Activated CD8-positive, alpha-beta T cell treated with anti-CD3 and anti-CD28 coated beads for 36 hours (primary cell): ENCODE measurements at regions of chr2 and their contacts with region 1.

Region 1: GRCh38 chr2:219218732-219219701 is at the start of gene ABCB6:
- DNase-seq: peak; percentile 95
- ATAC-seq: peak; percentile 92
- H3K4me3 Mint-ChIP-seq: peak within 1 kb of the TSS; percentile 88
- H3K27ac Mint-ChIP-seq: peak within 1 kb of the TSS; percentile 77
- H3K4me1 Mint-ChIP-seq: peaks cover 25% of the 10 kb centered on the region
- H3K27me3 Mint-ChIP-seq: no peaks in the 10 kb centered on the region
- CTCF ChIP-seq: no peak
- total RNA-seq, gene ABCB6: 32.3 to 35.7 TPM

Region 2: DNA sequence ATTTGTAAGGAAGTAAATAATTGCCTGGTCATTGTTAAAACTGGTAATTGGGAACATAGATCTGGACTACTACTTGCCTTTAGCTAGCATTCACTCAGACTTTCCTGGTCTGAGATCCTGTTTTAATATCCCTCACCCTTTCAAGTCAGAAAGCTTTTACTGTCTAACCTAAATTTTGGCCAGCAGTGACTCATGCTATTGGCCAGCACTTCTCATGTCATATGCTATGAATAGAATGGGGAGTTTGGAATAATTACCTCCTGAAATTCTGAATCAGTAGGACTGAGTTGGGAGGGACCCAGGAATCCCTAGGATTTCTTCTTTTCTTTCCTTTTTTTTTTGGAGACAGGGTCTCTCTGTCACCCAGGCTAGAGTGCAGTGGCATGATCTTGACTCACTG is 527.8 kb before region 1 on chr2:
- CTCF ChIA-PET with region 1: no interaction called
- POLR2A ChIA-PET with region 1: no interaction called
- intact Hi-C with region 1: no loop called
- DNase-seq: no peak
- ATAC-seq: no peak
- H3K4me3 Mint-ChIP-seq: no peak overlapping the region
- H3K27ac Mint-ChIP-seq: no peak overlapping the region
- H3K4me1 Mint-ChIP-seq: peaks cover 2% of the 10 kb centered on the region
- H3K27me3 Mint-ChIP-seq: no peaks in the 10 kb centered on the region
- CTCF ChIP-seq: no peak

Region 3: GRCh38 chr2:219104107-219105035 is 114.6 kb before region 1 on chr2:
- CTCF ChIA-PET with region 1: no interaction called
- POLR2A ChIA-PET with region 1: no interaction called
- intact Hi-C with region 1: no loop called
- DNase-seq: peak; percentile 30
- ATAC-seq: peak; percentile 90
- H3K4me3 Mint-ChIP-seq: no peak overlapping the region
- H3K27ac Mint-ChIP-seq: peak overlapping the region; percentile 28
- H3K4me1 Mint-ChIP-seq: peaks cover 32% of the 10 kb centered on the region
- H3K27me3 Mint-ChIP-seq: no peaks in the 10 kb centered on the region
- CTCF ChIP-seq: peak; percentile 82

Region 4: GRCh38 chr2:219171231-219171651 is 47.8 kb before region 1 on chr2:
- CTCF ChIA-PET with region 1: interaction called, 49 read pairs
- POLR2A ChIA-PET with region 1: interaction called, 6 read pairs
- intact Hi-C with region 1: no loop called
- DNase-seq: peak; percentile 42
- ATAC-seq: peak; percentile 53
- H3K4me3 Mint-ChIP-seq: no peak overlapping the region
- H3K27ac Mint-ChIP-seq: no peak overlapping the region
- H3K4me1 Mint-ChIP-seq: peaks cover 34% of the 10 kb centered on the region
- H3K27me3 Mint-ChIP-seq: no peaks in the 10 kb centered on the region
- CTCF ChIP-seq: peak; percentile 94

Region 5: GRCh38 chr2:219199470-219200211 is 19.4 kb before region 1 on chr2:
- CTCF ChIA-PET with region 1: no interaction called
- POLR2A ChIA-PET with region 1: interaction called, 15 read pairs
- intact Hi-C with region 1: no loop called
- DNase-seq: no peak
- ATAC-seq: peak; percentile 71
- H3K4me3 Mint-ChIP-seq: peak overlapping the region; percentile 62
- H3K27ac Mint-ChIP-seq: peak overlapping the region; percentile 40
- H3K4me1 Mint-ChIP-seq: peaks cover 17% of the 10 kb centered on the region
- H3K27me3 Mint-ChIP-seq: no peaks in the 10 kb centered on the region
- CTCF ChIP-seq: no peak

Region 6: GRCh38 chr2:219206442-219207253 is 12.4 kb before region 1 on chr2 and contains the start of gene ZFAND2B:
- CTCF ChIA-PET with region 1: interaction called, 4 read pairs
- POLR2A ChIA-PET with region 1: interaction called, 31 read pairs
- intact Hi-C with region 1: no loop called
- DNase-seq: peak; percentile 96
- ATAC-seq: peak; percentile 93
- H3K4me3 Mint-ChIP-seq: peak within 1 kb of the TSS; percentile 90
- H3K27ac Mint-ChIP-seq: peak within 1 kb of the TSS; percentile 96
- H3K4me1 Mint-ChIP-seq: peaks cover 41% of the 10 kb centered on the region
- H3K27me3 Mint-ChIP-seq: no peaks in the 10 kb centered on the region
- CTCF ChIP-seq: no peak
- total RNA-seq, gene ZFAND2B: 31.3 to 33.3 TPM

Region 7: DNA sequence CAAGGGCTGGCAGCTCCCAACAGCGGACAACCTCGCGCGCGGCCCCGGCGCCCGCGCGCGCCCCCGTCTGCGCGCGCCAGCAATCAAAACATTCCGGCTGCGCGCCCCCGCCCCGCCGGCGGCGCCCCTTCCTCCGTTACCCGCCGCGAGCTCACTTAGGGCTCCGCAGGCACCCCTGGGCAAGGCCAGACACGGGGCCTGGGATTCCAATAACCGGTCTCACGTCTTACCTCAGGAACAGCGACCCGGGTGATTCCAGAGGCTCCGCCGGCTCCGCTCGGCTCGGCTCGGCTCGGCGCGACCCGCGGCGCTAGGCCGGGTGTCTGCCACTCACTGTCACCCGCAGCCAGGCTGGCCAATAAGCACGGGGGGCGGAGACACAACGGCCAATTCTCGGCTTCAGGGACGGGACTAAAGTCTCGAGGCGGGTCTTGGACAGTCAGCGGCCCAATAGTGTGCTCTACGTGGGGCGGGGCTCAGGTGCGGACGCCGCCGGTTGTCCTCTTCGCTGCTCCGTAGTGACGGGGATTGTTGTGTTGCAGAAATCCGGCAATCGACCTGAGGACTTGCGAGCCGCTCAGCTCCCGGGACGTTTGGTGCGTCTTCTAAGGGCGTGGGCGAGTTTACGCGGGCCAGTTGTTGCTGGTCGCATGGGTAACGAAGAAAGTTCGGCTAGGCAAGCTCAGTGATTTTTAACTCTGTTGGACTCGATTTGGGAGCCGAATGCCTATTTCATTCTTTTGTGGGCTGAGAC is 10.5 kb after region 1 on chr2 and contains the starts of genes ANKZF1 and ATG9A:
- CTCF ChIA-PET with region 1: interaction called, 8 read pairs
- POLR2A ChIA-PET with region 1: interaction called, 60 read pairs
- intact Hi-C with region 1: no loop called
- DNase-seq: peak; percentile 100
- ATAC-seq: peak; percentile 98
- H3K4me3 Mint-ChIP-seq: peak within 1 kb of the TSS; percentile 95
- H3K27ac Mint-ChIP-seq: peak within 1 kb of the TSS; percentile 97
- H3K4me1 Mint-ChIP-seq: peaks cover 39% of the 10 kb centered on the region
- H3K27me3 Mint-ChIP-seq: no peaks in the 10 kb centered on the region
- CTCF ChIP-seq: no peak
- total RNA-seq, gene ANKZF1: 216 to 217 TPM
- total RNA-seq, gene ATG9A: 54.8 to 58.7 TPM

Region 8: GRCh38 chr2:219245148-219245898 is 26.3 kb after region 1 on chr2 and contains the starts of genes GLB1L and STK16:
- CTCF ChIA-PET with region 1: interaction called, 3 read pairs
- POLR2A ChIA-PET with region 1: interaction called, 12 read pairs
- intact Hi-C with region 1: no loop called
- DNase-seq: peak; percentile 93
- ATAC-seq: peak; percentile 58
- H3K4me3 Mint-ChIP-seq: peak within 1 kb of the TSS; percentile 98
- H3K27ac Mint-ChIP-seq: peak within 1 kb of the TSS; percentile 99
- H3K4me1 Mint-ChIP-seq: peaks cover 61% of the 10 kb centered on the region
- H3K27me3 Mint-ChIP-seq: no peaks in the 10 kb centered on the region
- CTCF ChIP-seq: no peak
- total RNA-seq, gene GLB1L: 1.2 to 2.8 TPM
- total RNA-seq, gene STK16: 34.4 to 35.4 TPM

Region 9: DNA sequence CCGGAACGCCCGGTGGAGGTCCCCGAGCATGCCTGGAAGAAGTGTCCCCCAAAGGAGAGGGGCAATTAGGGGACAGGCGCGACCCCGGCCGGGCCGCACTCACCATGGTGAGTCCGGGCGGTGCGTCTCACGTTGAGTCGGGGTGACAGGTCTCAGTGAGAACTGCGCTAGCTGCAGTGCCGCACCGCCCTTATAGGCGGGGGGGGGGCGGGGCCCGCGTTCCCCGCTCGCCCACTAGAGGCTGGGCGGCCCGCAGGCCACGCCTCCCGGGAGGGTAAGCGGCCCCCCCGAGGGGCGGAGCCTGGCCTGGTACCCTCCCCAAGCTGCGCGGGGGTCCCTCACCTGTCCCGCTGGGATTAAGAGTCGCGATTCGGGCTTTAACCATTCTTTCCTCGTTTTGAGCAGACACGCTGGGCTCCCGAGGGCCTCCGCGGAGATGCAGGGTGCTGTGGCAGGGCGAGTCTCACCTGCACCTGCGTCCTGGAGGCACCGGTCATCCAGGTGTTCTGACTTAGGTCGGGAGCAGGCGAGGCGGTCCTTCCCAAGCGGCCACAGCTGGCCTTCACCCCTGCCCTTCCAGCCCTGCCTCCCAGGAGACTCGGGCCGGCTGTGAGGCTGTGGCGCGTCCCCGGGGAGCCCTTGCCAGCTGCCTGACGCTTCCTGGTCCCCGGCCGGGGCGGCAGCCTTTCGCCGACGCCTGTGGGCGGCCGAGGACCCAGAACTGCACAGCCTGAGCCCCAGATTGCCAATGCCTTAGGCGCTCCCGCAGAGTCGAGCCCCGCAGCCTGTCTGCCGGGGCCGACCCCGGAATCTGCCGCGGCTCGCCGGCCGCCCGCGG is 35.0 kb after region 1 on chr2 and contains the start of gene TUBA4A:
- CTCF ChIA-PET with region 1: interaction called, 4 read pairs
- POLR2A ChIA-PET with region 1: interaction called, 25 read pairs
- intact Hi-C with region 1: no loop called
- DNase-seq: peak; percentile 92
- ATAC-seq: peak; percentile 73
- H3K4me3 Mint-ChIP-seq: peak within 1 kb of the TSS; percentile 77
- H3K27ac Mint-ChIP-seq: peak within 1 kb of the TSS; percentile 94
- H3K4me1 Mint-ChIP-seq: peaks cover 46% of the 10 kb centered on the region
- H3K27me3 Mint-ChIP-seq: no peaks in the 10 kb centered on the region
- CTCF ChIP-seq: no peak
- total RNA-seq, gene TUBA4A: 226 TPM

Region 10: DNA sequence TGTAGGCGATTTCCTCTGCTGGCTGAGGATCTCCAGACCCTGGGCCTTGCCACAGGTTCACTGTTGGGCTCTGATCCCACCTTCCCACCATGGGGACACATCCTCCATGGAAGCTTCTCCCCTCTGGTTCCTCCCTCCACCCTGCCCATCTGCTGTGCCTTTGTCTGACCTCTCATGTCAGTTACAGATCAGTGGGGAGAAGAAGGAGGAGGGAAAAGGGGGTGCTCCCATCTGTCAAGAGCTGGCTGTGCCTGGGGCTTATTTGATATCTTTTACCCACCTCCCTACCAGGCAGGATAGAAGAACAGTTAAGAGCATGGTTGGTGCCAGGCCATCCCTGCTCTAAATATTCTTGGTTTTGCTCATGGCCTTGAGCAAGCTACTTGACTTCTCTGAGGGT is 47.9 kb after region 1 on chr2:
- CTCF ChIA-PET with region 1: no interaction called
- POLR2A ChIA-PET with region 1: no interaction called
- intact Hi-C with region 1: no loop called
- DNase-seq: no peak
- ATAC-seq: no peak
- H3K4me3 Mint-ChIP-seq: no peak overlapping the region
- H3K27ac Mint-ChIP-seq: no peak overlapping the region
- H3K4me1 Mint-ChIP-seq: no peaks in the 10 kb centered on the region
- H3K27me3 Mint-ChIP-seq: no peaks in the 10 kb centered on the region
- CTCF ChIP-seq: no peak

Region 11: GRCh38 chr2:219446081-219446521 is 227.1 kb after region 1 on chr2:
- CTCF ChIA-PET with region 1: no interaction called
- POLR2A ChIA-PET with region 1: no interaction called
- intact Hi-C with region 1: no loop called
- DNase-seq: no peak
- ATAC-seq: no peak
- H3K4me3 Mint-ChIP-seq: no peak overlapping the region
- H3K27ac Mint-ChIP-seq: no peak overlapping the region
- H3K4me1 Mint-ChIP-seq: peaks cover 18% of the 10 kb centered on the region
- H3K27me3 Mint-ChIP-seq: peaks cover 17% of the 10 kb centered on the region
- CTCF ChIP-seq: no peak